B cell (primary cell): ENCODE measurements at regions of chr19 and their contacts with region 1.

Region 1: GRCh38 chr19:29761575-29762232 is 46.6 kb upstream of the C19orf12 start:
- DNase-seq: no peak
- ATAC-seq: no peak
- H3K4me3 ChIP-seq: no peak overlapping the region
- H3K4me3 Mint-ChIP-seq: no peak overlapping the region
- H3K27ac ChIP-seq: no peak overlapping the region
- H3K27ac Mint-ChIP-seq: no peak overlapping the region
- H3K4me1 ChIP-seq: peaks cover 8% of the 10 kb centered on the region in 2 donors
- H3K4me1 Mint-ChIP-seq: peaks cover 3% of the 10 kb centered on the region
- H3K27me3 ChIP-seq: peaks cover 0 to 6% (median 0%) of the 10 kb centered on the region in 4 experiments
- H3K27me3 Mint-ChIP-seq: peaks cover 13% of the 10 kb centered on the region
- CTCF ChIP-seq: no peak

Region 2: DNA sequence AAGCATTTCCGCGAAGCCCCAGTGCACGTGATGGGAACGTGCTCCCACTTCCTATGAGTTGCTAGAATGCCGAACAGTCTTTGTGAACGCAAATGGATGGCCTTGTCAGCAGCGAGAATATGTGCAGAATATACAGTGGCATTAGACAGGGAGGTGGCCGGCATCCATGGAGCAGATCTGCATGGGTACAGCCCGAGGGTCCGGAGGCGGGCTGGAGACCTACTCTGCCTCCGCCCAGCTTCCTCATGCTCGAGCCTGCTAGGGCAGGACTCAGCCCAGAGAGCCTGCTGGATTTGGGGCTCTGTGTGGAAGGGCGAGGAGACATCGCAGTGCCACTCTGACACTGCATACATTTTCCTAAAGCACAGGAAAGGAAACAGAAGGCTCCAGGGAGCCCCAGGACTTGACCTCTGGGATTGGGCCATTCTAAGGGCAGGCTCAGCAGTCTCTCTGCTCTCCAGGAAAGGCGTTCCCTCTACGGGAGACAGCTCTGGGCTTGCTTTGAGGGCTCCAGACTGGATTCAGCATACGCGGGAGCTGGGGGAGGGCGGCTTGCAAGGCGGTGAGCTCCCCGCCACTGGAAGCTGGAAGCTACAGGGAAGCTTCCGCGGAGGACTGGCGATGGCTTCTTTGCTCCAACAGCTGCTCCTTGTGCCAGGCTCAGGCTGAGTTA is 492.8 kb before region 1 on chr19:
- CTCF ChIA-PET with region 1: no interaction called
- POLR2A ChIA-PET with region 1: no interaction called
- intact Hi-C with region 1: no loop called
- DNase-seq: no peak
- ATAC-seq: no peak
- H3K4me3 ChIP-seq: no peak overlapping the region
- H3K4me3 Mint-ChIP-seq: no peak overlapping the region
- H3K27ac ChIP-seq: no peak overlapping the region
- H3K27ac Mint-ChIP-seq: no peak overlapping the region
- H3K4me1 ChIP-seq: no peaks in the 10 kb centered on the region
- H3K4me1 Mint-ChIP-seq: no peaks in the 10 kb centered on the region
- H3K27me3 ChIP-seq: no peaks in the 10 kb centered on the region
- H3K27me3 Mint-ChIP-seq: peaks cover 15% of the 10 kb centered on the region
- CTCF ChIP-seq: no peak

Region 3: GRCh38 chr19:29886586-29886985 is 124.9 kb after region 1 on chr19:
- CTCF ChIA-PET with region 1: interaction called, 10 read pairs
- POLR2A ChIA-PET with region 1: no interaction called
- intact Hi-C with region 1: no loop called
- DNase-seq: no peak
- ATAC-seq: no peak
- H3K4me3 ChIP-seq: no peak overlapping the region
- H3K4me3 Mint-ChIP-seq: no peak overlapping the region
- H3K27ac ChIP-seq: no peak overlapping the region
- H3K27ac Mint-ChIP-seq: no peak overlapping the region
- H3K4me1 ChIP-seq: peaks cover 3 to 24% of the 10 kb centered on the region in 2 donors
- H3K4me1 Mint-ChIP-seq: peaks cover 8% of the 10 kb centered on the region
- H3K27me3 ChIP-seq: no peaks in the 10 kb centered on the region
- H3K27me3 Mint-ChIP-seq: no peaks in the 10 kb centered on the region
- CTCF ChIP-seq: no peak